Activated CD4-positive, alpha-beta T cell treated with anti-CD3 and anti-CD28 coated beads for 36 hours (primary cell): ENCODE measurements at regions of chr7 and their contacts with region 1.

Region 1: DNA sequence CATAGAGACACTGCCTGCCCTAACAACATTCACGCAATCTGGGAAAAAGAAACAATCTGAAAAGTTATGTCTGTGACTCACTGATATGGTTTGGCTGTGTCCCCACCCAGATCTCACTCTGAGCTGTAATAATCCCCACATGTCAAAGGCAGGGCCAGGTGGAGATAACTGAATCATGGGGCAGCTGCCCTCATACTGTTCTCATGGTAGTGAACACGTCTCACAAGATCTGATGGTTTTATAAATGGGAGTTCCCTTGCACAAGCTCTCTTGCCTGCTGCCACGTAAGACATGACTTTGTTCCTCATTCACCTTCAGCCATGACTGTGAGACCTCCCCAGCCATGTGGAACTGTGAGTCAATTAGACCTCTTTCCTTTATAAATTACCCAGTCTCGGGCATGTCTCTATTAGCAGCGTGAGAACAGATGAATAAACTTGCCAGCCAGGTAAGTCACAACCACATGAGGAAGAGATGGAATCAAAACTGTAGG is 341.5 kb upstream of the AOAH start:
- DNase-seq: peak; percentile 71
- ATAC-seq: peak; percentile 86
- H3K4me3 Mint-ChIP-seq: peak overlapping the region; percentile 20
- H3K27ac Mint-ChIP-seq: peak overlapping the region; percentile 88
- H3K4me1 Mint-ChIP-seq: peaks cover 70% of the 10 kb centered on the region
- H3K27me3 Mint-ChIP-seq: no peaks in the 10 kb centered on the region

Region 2: DNA sequence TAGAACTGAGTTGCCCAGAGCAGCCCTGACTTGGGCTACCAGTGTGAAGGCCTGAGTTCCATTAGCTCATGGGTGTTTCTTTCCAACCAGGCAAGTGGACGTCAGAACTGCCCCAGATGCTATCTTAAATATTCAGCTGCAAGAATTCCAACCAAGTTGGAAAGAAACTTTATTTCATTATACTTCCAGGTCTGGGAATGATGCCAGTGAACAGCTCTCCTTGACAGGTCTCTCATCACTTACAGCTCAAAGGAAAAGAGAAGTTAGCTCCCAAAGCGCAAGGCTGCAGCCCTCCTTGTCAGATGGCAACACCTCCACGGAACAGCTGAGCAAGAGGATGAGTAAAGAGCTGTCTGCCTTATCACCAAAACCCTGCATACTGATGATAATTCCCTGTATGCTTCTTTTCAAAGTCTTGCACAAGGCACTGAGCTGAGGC is 86.0 kb before region 1 on chr7:
- CTCF ChIA-PET with region 1: no interaction called
- POLR2A ChIA-PET with region 1: no interaction called
- intact Hi-C with region 1: no loop called
- DNase-seq: no peak
- ATAC-seq: no peak
- H3K4me3 Mint-ChIP-seq: no peak overlapping the region
- H3K27ac Mint-ChIP-seq: no peak overlapping the region
- H3K4me1 Mint-ChIP-seq: peaks cover 3% of the 10 kb centered on the region
- H3K27me3 Mint-ChIP-seq: no peaks in the 10 kb centered on the region

Region 3: DNA sequence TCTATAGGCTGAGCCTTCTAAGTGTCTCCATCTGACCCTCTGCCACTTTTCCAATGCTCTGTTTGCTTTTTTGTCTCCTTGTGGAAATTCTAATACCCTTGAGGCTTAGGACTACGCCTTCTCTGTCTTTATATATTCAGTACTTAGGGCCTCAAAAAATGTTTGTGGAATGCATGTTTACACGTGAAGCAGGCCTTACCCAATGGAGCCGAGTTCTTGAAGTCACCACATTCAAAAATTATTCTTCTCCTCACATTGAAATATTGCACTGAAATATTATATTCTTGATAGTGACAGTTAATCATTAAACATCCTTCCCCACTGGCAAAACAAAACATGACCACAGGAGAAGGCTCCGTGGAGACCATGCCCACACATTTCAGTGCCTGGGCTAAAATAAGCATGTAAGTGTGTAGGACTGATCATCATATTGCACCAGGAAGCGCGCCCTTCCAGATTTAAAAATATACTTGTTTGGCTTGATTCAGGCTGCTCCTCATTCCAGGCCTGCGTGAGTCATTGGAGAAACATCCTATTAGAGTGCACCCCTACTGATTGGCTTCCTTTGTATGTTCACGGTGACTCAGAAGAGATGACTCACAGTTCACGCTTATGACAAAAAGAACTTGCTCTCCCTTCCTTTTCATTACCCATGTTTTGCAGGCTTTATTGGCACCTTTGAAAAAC is 34.1 kb before region 1 on chr7:
- CTCF ChIA-PET with region 1: no interaction called
- POLR2A ChIA-PET with region 1: no interaction called
- intact Hi-C with region 1: loop called (anchors 1 to 5 kb)
- DNase-seq: peak; percentile 73
- ATAC-seq: peak; percentile 90
- H3K4me3 Mint-ChIP-seq: no peak overlapping the region
- H3K27ac Mint-ChIP-seq: peak overlapping the region; percentile 52
- H3K4me1 Mint-ChIP-seq: peaks cover 77% of the 10 kb centered on the region
- H3K27me3 Mint-ChIP-seq: no peaks in the 10 kb centered on the region

Region 4: DNA sequence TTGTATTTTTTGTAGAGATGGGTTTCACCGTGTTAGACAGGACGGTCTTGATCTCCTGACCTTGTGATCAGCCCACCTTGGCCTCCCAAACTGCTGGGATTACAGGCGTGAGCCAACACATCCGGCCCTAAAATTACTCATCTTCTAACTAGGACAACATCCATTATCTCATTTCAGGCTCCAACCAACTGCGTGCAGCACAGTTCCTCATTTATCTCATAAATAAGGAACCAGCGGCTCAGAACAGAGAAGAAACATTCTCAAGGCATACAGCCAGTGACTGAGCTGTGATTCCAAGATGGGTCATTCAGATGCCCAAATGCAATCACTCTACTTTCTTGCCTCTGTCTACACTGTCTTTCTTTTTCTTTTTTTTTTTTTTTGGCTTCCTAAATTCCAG is 26.7 kb after region 1 on chr7:
- CTCF ChIA-PET with region 1: no interaction called
- POLR2A ChIA-PET with region 1: no interaction called
- intact Hi-C with region 1: no loop called
- DNase-seq: no peak
- ATAC-seq: no peak
- H3K4me3 Mint-ChIP-seq: no peak overlapping the region
- H3K27ac Mint-ChIP-seq: no peak overlapping the region
- H3K4me1 Mint-ChIP-seq: peaks cover 8% of the 10 kb centered on the region
- H3K27me3 Mint-ChIP-seq: no peaks in the 10 kb centered on the region